ENCODE measurements at regions of chr7 and their contacts with region 1.

Region 1: DNA sequence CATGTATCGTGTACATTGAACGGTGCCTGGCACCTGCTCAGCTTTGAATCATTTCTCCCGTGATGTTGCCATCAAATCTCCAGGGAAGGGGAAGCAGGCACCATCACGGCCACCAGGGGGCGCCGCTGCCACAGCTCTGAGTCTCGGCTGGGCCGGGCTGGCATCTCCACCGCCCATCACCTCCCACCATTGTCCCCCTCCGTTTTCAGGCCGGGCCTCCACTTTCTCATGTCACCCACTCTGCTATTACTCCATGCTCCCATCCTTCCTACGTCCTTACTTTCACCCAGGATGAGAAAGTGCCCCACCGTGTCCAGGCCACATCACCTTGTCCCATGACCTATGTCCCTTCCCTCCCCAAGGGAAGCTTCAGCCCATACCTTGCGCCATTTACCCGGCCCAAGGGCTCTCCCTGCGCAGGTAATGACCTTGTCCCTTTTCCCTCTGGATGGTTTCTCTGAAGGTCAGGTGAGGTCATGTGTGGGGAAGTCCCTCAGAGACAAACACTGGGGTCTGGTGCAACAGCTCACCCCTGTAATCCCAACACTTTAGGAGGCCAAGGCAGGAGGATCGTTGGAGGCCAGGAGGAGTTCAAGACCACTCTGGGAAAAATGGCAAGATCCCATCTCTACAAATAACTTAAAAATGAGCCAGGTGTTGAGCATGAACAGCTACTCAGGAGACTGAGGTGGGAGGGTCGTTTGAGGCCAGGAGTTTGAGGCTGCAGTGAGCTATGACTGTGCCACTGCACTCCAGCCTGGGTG is 31.8 kb upstream of the OCM2 start:
- DNase-seq: peak; percentile 57 to 88 (median 67)
- ATAC-seq: peak; percentile 47 to 87 (median 87)
- H3K4me3 ChIP-seq: no peak overlapping the region
- H3K27ac ChIP-seq: no peak overlapping the region
- H3K4me1 ChIP-seq: no peaks in the 10 kb centered on the region
- H3K27me3 ChIP-seq: peaks cover 0 to 11% (median 0%) of the 10 kb centered on the region in 9 donors
- CTCF ChIP-seq: peak; percentile 80 to 96 (median 91)
- POLR2A ChIP-seq: no peak

Region 2: GRCh38 chr7:97971990-97972943 is 49.5 kb before region 1 on chr7:
- intact Hi-C with region 1: no loop called
- DNase-seq: peak; percentile 72 to 91 (median 85)
- ATAC-seq: peak; percentile 82 to 97 (median 96)
- H3K4me3 ChIP-seq: peak overlapping the region; percentile 62 to 99 (median 90)
- H3K27ac ChIP-seq: peak overlapping the region in 11 of 12 donors; percentile 4 to 76 (median 60)
- H3K4me1 ChIP-seq: peaks cover 0 to 9% (median 0%) of the 10 kb centered on the region in 12 donors
- H3K27me3 ChIP-seq: no peaks in the 10 kb centered on the region
- CTCF ChIP-seq: peak in 6 of 12 donors; percentile 3 to 46 (median 21)
- POLR2A ChIP-seq: peak in 1 of 2 donors; percentile 28

Region 3: DNA sequence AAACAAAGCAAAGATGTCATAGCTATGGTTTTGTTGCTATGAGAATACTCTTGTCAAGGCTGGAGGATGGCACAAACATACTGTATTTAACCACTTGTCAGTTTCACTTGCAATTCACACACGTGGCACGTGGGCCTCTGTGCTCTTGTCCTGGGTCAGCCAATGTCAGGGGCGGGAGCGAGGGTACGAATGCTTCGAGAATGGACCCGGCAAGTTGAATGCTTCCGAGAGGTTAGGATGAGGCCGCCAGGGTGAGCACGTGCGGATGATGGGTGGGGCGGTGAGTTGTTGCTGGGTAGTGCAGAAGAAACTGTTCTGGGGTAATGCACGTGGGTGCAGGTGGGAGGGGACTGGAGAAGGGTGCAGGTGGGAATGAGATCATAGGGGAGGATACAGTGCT is 21.4 kb before region 1 on chr7:
- intact Hi-C with region 1: no loop called
- DNase-seq: no peak
- ATAC-seq: no peak
- H3K4me3 ChIP-seq: no peak overlapping the region
- H3K27ac ChIP-seq: no peak overlapping the region
- H3K4me1 ChIP-seq: no peaks in the 10 kb centered on the region
- H3K27me3 ChIP-seq: peaks cover 0 to 15% (median 0%) of the 10 kb centered on the region in 9 donors
- CTCF ChIP-seq: no peak
- POLR2A ChIP-seq: no peak

Region 4: GRCh38 chr7:98091061-98091460 is 69.3 kb after region 1 on chr7:
- intact Hi-C with region 1: loop called in 1 of 10 experiments (anchors 10 kb)
- DNase-seq: no peak
- ATAC-seq: no peak
- H3K4me3 ChIP-seq: no peak overlapping the region
- H3K27ac ChIP-seq: no peak overlapping the region
- H3K4me1 ChIP-seq: no peaks in the 10 kb centered on the region
- H3K27me3 ChIP-seq: peaks cover 0 to 6% (median 0%) of the 10 kb centered on the region in 9 donors
- CTCF ChIP-seq: no peak
- POLR2A ChIP-seq: no peak

Region 5: GRCh38 chr7:98106647-98107445 is 85.1 kb after region 1 on chr7 and contains the start of gene LMTK2:
- intact Hi-C with region 1: loop called in 3 of 10 experiments (anchors 5 to 10 kb)
- DNase-seq: peak; percentile 94 to 98 (median 95)
- ATAC-seq: peak; percentile 99 to 100 (median 100)
- H3K4me3 ChIP-seq: peak within 1 kb of the TSS; percentile 78 to 100 (median 94)
- H3K27ac ChIP-seq: peak within 1 kb of the TSS; percentile 60 to 93 (median 86)
- H3K4me1 ChIP-seq: peaks cover 0 to 46% (median 28%) of the 10 kb centered on the region in 12 donors
- H3K27me3 ChIP-seq: no peaks in the 10 kb centered on the region
- CTCF ChIP-seq: peak; percentile 93 to 99 (median 98)
- POLR2A ChIP-seq: peak; percentile 73 to 97
- total RNA-seq, gene LMTK2: 18.8 to 58.3 (median 34.5) TPM

Region 6: DNA sequence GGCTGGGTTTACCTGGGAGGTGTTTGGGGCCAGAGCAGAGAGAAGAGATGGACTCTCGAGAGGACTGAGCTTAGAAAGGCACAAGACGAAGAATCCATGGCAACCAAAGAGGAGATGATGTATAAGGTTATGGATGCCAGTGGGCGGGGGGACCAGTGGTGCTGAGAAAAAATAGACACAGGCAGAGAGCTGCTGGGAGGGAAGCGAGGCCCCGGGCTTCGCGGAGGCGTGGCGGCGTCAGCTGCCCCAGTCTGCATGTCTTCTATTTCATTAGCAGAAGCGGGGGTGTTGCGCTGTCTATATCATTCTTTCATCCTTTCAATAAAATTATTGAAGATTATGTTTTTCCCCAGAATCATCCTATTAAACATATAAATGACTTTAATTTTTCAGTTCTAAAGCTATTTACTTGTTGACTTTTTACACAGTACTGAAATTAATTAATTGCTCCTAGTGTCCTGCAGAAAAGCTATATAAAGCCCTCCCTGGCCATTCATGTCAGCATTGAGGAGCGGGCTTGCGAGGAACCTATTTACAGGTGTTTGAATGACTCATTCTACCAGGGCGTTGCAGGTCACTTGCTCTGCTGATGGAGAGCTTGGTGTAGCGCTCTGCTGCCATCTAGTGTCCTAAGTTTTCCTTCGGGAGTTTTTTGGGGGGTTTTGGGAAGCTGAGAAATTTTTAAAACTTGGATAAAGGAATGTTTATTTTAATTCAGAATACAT is 146.6 kb after region 1 on chr7:
- intact Hi-C with region 1: loop called (anchors 1 to 5 kb)
- DNase-seq: peak in 2 of 5 donors; percentile 44 to 50
- ATAC-seq: peak in 3 of 4 donors; percentile 48 to 68 (median 67)
- H3K4me3 ChIP-seq: no peak overlapping the region
- H3K27ac ChIP-seq: no peak overlapping the region
- H3K4me1 ChIP-seq: peaks cover 0 to 16% (median 5%) of the 10 kb centered on the region in 12 donors
- H3K27me3 ChIP-seq: no peaks in the 10 kb centered on the region
- CTCF ChIP-seq: peak; percentile 57 to 93 (median 84)
- POLR2A ChIP-seq: no peak

Region 7: DNA sequence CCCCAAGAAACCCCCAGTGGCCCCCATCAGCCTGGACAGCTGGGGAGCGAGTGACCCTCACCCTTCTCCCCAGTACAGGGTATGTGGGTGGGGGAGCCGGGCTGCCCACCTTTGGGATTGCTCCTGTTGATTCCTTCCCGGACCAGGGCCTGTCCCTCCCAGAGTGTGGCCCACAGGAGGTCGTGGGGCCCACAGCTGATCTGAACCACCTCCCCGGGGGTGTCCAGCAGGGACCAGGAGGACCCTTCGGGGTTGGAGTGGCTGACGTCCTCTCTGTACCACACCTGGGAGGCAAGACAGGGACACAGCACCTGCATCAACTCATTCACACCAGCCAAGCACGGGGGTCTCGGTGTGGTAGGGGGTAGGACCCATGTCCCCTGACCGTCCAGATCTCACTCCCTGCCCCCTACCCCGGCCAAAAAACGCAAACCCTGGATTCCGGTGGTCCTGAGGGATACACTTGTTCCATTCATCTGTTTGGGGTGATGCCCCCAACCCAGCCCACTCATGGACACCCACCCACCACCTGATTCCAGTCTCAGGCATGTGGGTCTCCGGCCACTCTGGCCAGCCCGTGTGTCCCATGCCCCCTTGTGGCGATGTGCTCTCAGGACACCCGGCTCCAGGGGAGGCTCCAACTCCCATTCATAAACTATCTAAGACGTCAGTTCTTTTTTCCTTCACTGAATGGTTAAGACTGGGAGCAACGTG is 219.3 kb after region 1 on chr7:
- intact Hi-C with region 1: loop called in 5 of 10 experiments (anchors 2 to 10 kb)
- DNase-seq: peak in 1 of 5 donors; percentile 56
- ATAC-seq: peak in 3 of 4 donors; percentile 40 to 62 (median 56)
- H3K4me3 ChIP-seq: no peak overlapping the region
- H3K27ac ChIP-seq: no peak overlapping the region
- H3K4me1 ChIP-seq: peaks cover 0 to 12% (median 4%) of the 10 kb centered on the region in 12 donors
- H3K27me3 ChIP-seq: no peaks in the 10 kb centered on the region
- CTCF ChIP-seq: peak; percentile 55 to 80 (median 68)
- POLR2A ChIP-seq: no peak

Region 8: GRCh38 chr7:98354511-98355257 is 332.9 kb after region 1 on chr7:
- intact Hi-C with region 1: no loop called
- DNase-seq: peak in 3 of 5 donors; percentile 29 to 66 (median 52)
- ATAC-seq: peak in 3 of 4 donors; percentile 66 to 69 (median 68)
- H3K4me3 ChIP-seq: no peak overlapping the region
- H3K27ac ChIP-seq: peak overlapping the region in 7 of 12 donors; percentile 6 to 68 (median 39)
- H3K4me1 ChIP-seq: peaks cover 0 to 6% (median 0%) of the 10 kb centered on the region in 12 donors
- H3K27me3 ChIP-seq: no peaks in the 10 kb centered on the region
- CTCF ChIP-seq: no peak
- POLR2A ChIP-seq: no peak

Region 9: DNA sequence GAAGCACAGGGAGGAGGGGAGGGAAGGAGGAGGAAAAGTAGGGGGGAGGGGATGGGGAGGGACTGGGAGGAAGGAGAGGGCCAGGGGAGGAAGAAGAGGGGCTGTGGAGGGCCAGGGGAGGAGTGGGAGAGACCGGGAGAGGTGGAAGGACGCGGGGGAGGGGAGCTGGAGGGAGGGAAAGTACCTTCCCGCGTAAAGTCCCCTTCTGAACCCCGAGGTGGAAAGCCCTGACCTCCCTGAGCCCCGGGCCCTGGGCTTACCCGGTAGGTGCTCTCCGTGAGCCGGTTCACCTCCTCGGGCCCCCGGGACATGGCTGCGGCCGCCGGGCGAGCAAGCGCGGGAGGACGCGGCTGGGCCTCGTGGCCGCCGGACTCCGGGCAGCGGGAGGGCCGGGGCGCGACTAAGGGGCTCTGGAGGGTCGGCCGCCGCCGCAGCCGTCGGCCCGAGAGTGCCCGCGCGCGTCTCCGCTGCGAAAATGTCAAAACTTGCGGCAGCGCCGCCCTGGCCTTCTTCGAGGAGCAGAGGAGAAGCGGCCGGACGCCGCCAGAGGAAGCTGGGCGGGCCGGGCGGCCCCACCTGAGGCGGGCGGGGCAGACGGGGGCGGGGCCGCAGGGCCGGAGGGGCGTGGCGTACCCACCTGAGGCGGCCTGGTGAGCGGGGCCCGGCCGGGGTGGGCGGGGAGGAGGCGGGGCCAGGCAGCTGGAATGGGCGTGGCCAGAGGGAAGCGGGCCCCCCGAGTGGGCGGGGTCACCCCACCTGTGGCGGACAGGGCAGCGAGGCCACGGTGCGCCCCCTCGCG is 379.0 kb after region 1 on chr7 and contains the start of gene BAIAP2L1:
- intact Hi-C with region 1: loop called in 1 of 10 experiments (anchors 10 kb)
- DNase-seq: peak; percentile 75 to 91 (median 81)
- ATAC-seq: peak; percentile 76 to 98 (median 94)
- H3K4me3 ChIP-seq: peak within 1 kb of the TSS; percentile 52 to 89 (median 66)
- H3K27ac ChIP-seq: peak within 1 kb of the TSS; percentile 29 to 85 (median 68)
- H3K4me1 ChIP-seq: peaks cover 0 to 12% (median 6%) of the 10 kb centered on the region in 12 donors
- H3K27me3 ChIP-seq: peaks cover 0 to 27% (median 12%) of the 10 kb centered on the region in 9 donors
- CTCF ChIP-seq: peak in 4 of 12 donors; percentile 62 to 80 (median 68)
- POLR2A ChIP-seq: peak in 1 of 2 donors; percentile 28
- total RNA-seq, gene BAIAP2L1: 0.64 to 2.7 (median 1.8) TPM